ENCODE measurements at regions of chr9 and their contacts with region 1.

Region 1: GRCh38 chr9:113876151-113876992 is at the start of gene ZNF618:
- DNase-seq: peak; percentile 47
- H3K4me3 ChIP-seq: peak within 1 kb of the TSS; percentile 98 to 100 (median 98)
- H3K27ac ChIP-seq: peak within 1 kb of the TSS; percentile 77
- H3K4me1 ChIP-seq: peaks cover 27% of the 10 kb centered on the region
- H3K27me3 ChIP-seq: no peaks in the 10 kb centered on the region
- CTCF ChIP-seq: peak in 1 of 2 donors; percentile 28
- POLR2A ChIP-seq: no peak
- total RNA-seq, gene ZNF618: 60.6 and 80.3 TPM in 2 replicates

Region 2: DNA sequence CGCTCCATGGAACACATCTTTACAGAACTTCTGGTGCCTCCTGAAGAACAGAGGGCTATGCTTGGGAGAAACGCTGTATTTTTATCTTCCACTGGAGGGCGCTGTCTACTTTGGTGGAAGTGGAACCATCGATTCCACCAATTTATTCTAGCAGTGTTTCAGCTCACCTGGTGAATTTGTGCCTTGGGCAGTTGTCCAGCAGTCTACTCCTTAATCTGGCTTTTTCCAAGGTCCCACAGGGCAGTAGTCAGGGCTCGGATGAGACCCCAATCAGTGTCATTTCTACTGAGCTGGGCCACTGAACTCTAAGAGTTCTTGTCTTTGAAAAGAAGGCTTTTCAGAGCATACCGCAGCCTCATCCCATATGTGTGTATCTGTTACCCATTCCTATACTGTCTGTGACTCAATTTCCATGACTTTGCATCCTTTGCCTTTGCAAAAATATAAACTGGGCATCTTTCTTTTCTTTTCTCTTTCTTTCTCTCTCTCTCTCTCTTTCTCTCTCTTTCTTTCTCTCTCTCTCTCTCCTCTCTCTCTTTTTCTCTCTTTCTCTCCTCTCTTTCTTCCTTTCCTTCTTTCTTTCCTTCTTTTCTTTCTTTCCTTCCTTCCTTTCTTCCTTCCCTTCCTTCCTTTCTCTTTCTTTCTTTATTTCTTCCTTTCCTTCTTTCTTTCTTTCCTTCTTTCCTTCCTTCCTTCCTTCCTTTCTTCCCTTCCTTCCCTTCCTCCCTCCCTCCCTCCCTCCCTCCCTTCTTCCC is 138.7 kb before region 1 on chr9:
- CTCF ChIA-PET with region 1: interaction called, 5 read pairs
- POLR2A ChIA-PET with region 1: no interaction called
- dilution Hi-C with region 1: no loop called
- intact Hi-C with region 1: loop called (anchors 1 kb)
- DNase-seq: peak; percentile 69
- H3K4me3 ChIP-seq: no peak overlapping the region
- H3K27ac ChIP-seq: no peak overlapping the region
- H3K4me1 ChIP-seq: no peaks in the 10 kb centered on the region
- H3K27me3 ChIP-seq: peaks cover 6 to 13% of the 10 kb centered on the region in 2 experiments
- CTCF ChIP-seq: peak; percentile 72 to 78
- POLR2A ChIP-seq: no peak

Region 3: DNA sequence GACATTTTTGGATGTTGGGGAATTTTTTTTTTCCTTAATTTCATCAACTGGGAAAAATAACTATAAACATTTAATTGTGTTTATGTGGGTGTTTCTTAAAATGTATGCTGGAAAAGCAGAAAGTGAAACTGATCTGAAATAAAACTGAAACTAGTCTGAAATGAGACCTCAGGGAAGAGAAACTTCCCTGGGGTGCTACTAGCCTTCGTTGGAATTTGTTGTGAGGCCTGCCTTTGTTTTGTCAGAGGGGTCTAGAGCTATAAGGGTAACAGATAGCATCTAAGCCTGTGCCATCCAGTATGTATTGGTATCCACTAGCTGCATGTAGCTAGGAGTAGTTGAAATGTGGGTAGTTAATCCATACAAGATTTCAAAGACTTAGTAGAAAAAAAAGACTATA is 10.1 kb after region 1 on chr9:
- CTCF ChIA-PET with region 1: interaction called, 21 read pairs
- POLR2A ChIA-PET with region 1: no interaction called
- dilution Hi-C with region 1: no loop called
- intact Hi-C with region 1: no loop called
- DNase-seq: peak; percentile 11
- H3K4me3 ChIP-seq: no peak overlapping the region
- H3K27ac ChIP-seq: peak overlapping the region; percentile 35
- H3K4me1 ChIP-seq: peaks cover 22% of the 10 kb centered on the region
- H3K27me3 ChIP-seq: no peaks in the 10 kb centered on the region
- CTCF ChIP-seq: no peak
- POLR2A ChIP-seq: no peak

Region 4: DNA sequence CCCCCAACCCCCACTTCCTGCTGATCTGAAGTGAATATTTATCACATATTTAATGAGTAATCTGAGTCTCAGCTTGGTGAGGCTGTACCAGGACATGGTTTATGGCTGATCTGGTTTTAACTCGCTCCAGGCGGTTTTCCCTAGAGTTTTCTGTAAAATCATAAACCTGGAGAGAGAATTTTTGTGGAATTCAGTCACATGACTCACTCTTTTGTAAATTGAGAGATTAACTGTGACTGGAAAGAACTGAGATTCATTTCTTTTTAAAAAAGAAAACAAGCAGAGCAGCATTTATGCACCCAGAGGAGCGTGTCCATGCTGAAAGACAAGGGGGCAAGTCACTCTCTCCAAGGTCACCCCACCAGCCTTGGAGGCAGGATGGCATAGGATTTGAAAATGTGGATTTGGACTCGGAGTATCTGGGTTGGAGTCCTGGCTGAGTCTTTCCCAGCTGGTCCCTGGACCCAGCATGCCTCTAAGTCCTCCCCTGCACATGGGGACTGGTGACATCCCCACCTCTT is 81.5 kb after region 1 on chr9:
- CTCF ChIA-PET with region 1: interaction called, 56 read pairs
- POLR2A ChIA-PET with region 1: interaction called, 4 read pairs
- dilution Hi-C with region 1: no loop called
- intact Hi-C with region 1: loop called (anchors 1 kb)
- DNase-seq: peak; percentile 77
- H3K4me3 ChIP-seq: no peak overlapping the region
- H3K27ac ChIP-seq: peak overlapping the region; percentile 98
- H3K4me1 ChIP-seq: peaks cover 58% of the 10 kb centered on the region
- H3K27me3 ChIP-seq: no peaks in the 10 kb centered on the region
- CTCF ChIP-seq: no peak
- POLR2A ChIP-seq: no peak

Region 5: DNA sequence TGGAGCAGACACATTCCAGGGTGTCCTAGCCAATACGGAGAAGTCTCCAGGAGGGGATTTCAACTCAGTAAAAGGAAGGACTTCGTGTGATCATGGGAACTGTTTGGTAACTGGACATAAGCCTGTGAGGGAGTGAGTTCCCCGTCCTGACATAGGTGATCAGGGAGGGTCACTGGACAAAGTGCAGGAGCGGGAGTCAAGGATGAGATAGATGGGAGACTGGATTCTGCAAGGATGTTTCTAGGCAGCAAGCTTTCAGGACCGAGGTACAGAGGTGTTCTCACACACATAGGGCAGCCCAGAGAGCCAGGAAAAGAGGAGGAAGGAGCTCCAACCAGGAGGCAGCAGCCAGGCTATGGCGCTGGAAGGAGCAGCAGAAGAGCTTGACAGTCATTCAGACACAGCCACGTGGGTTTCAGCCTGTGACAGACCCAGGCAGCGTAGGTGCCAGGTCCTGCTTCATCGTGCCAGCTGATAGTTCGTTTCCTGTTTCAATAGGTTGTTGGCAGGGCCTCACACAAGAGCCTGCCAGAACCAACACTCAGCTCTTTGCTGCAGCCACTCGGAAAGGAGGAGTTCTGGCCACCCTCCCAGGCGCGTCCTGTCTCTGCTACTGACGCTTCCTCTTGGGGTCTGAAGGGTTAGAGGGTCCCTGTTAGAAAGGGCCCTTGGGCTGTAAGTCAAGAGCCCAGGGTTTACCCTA is 117.6 kb after region 1 on chr9:
- CTCF ChIA-PET with region 1: interaction called, 11 read pairs
- POLR2A ChIA-PET with region 1: no interaction called
- dilution Hi-C with region 1: no loop called
- intact Hi-C with region 1: no loop called
- DNase-seq: peak; percentile 95
- H3K4me3 ChIP-seq: no peak overlapping the region
- H3K27ac ChIP-seq: peak overlapping the region; percentile 40
- H3K4me1 ChIP-seq: peaks cover 42% of the 10 kb centered on the region
- H3K27me3 ChIP-seq: no peaks in the 10 kb centered on the region
- CTCF ChIP-seq: no peak
- POLR2A ChIP-seq: no peak

Measured in endothelial cell of umbilical vein (primary cell).